Endothelial cell of umbilical vein (primary cell): ENCODE measurements at regions of chr12 and their contacts with region 1.

Region 1: GRCh38 chr12:26845057-26845666 is 12.2 kb upstream of the ITPR2 start:
- DNase-seq: peak; percentile 65
- H3K4me3 ChIP-seq: no peak overlapping the region
- H3K27ac ChIP-seq: no peak overlapping the region
- H3K4me1 ChIP-seq: peaks cover 15% of the 10 kb centered on the region
- H3K27me3 ChIP-seq: no peaks in the 10 kb centered on the region
- CTCF ChIP-seq: peak; percentile 65 to 66
- POLR2A ChIP-seq: no peak

Region 2: DNA sequence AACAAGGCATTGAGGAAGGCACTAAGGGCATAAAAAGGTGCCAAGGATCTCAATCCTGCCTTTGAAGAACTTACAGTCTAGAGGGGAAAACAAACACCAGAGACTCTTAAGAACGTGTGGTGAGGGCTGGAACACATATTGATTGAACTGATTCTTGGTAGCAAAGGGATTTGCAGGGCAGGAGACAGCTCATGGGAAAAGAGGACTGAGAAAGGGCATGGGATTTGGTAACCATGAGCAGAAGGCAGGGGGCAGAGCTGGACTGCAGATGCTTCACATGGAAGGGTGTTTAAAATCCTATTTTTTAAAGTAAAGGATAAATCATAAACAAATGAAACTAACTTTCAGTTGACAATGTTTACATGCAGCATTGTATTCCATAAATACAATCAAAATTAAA is 215.3 kb before region 1 on chr12:
- CTCF ChIA-PET with region 1: interaction called, 6 read pairs
- POLR2A ChIA-PET with region 1: no interaction called
- dilution Hi-C with region 1: no loop called
- intact Hi-C with region 1: loop called (anchors 10 kb)
- DNase-seq: peak; percentile 61
- H3K4me3 ChIP-seq: peak overlapping the region in 1 of 3 experiments; percentile 31
- H3K27ac ChIP-seq: peak overlapping the region; percentile 78
- H3K4me1 ChIP-seq: peaks cover 32% of the 10 kb centered on the region
- H3K27me3 ChIP-seq: no peaks in the 10 kb centered on the region
- CTCF ChIP-seq: peak; percentile 27 to 32
- POLR2A ChIP-seq: no peak

Region 3: GRCh38 chr12:26878661-26879119 is 33.5 kb after region 1 on chr12:
- CTCF ChIA-PET with region 1: interaction called, 57 read pairs
- POLR2A ChIA-PET with region 1: no interaction called
- dilution Hi-C with region 1: no loop called
- intact Hi-C with region 1: no loop called
- DNase-seq: peak; percentile 93
- H3K4me3 ChIP-seq: no peak overlapping the region
- H3K27ac ChIP-seq: no peak overlapping the region
- H3K4me1 ChIP-seq: peaks cover 9% of the 10 kb centered on the region
- H3K27me3 ChIP-seq: no peaks in the 10 kb centered on the region
- CTCF ChIP-seq: no peak
- POLR2A ChIP-seq: no peak